Right ventricle myocardium inferior (tissue), 1 donor: ENCODE measurements at regions of chr1 and their contacts with region 1.

Region 1: DNA sequence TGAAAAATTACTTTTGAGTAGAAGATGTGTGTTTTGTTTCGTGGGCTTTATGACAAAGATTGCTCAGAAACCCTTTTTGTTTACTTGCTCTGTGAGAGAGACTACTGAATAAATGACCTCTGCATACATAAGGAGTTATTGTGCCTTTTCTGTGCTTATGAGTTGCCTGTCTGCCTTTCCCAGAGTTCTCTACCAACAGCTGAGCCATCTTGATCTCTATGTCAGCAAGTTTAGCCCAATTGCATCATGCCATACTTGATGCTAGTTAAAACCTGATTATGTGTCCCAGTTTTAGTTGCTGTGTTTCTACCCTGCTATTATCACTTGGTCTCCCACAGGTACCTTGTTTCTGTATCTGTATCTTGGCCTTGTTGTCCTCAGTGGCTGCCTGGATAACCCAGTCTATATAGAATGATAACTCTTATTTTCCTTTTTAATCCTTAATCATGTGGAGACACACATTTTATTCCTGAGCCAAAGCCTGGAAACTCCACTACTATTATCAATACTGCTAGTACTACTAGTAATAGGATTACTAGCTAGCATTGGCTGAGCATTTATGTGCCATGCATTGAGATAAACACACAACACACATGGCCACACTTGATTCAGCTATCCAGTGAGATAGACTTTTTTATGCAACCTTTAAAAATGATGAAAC is 28.7 kb upstream of the GNG12 start:
- DNase-seq: no peak
- ATAC-seq: no peak

Region 2: DNA sequence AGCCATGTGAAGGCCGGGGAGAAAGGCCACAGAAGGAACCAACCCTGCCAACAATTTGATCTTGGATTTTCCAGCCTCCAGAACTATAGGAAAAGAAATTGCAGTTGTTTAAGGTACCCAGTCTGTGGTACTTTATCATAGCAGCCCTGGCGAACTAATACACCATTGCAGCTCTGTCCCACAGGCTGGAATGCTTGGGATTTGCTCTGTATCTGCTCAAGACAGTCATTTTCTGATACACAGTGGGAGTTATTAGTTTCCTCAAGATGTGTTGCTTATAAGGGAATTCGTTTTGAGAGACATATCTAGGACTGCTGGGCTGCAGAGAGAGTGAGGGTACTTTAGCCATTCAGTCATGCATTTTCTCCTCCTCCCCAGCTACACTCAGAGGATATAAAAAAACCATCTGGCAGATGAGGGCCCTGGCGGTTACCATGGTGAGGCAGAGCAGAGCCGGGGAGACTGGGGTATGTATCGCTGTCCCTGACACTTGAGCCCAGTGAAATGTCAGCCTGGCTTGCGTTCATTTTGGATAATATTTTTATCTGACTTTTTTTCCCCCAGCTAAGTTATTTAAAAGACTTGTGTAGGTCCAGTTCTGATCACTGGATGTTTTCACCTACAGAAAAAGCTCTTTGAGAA is 83.9 kb after region 1 on chr1:
- intact Hi-C with region 1: loop called (anchors 5 kb)
- DNase-seq: peak; percentile 68
- ATAC-seq: peak; percentile 88